Caco-2 (cell line): ENCODE measurements at regions of chr15 and their contacts with region 1.

Region 1: DNA sequence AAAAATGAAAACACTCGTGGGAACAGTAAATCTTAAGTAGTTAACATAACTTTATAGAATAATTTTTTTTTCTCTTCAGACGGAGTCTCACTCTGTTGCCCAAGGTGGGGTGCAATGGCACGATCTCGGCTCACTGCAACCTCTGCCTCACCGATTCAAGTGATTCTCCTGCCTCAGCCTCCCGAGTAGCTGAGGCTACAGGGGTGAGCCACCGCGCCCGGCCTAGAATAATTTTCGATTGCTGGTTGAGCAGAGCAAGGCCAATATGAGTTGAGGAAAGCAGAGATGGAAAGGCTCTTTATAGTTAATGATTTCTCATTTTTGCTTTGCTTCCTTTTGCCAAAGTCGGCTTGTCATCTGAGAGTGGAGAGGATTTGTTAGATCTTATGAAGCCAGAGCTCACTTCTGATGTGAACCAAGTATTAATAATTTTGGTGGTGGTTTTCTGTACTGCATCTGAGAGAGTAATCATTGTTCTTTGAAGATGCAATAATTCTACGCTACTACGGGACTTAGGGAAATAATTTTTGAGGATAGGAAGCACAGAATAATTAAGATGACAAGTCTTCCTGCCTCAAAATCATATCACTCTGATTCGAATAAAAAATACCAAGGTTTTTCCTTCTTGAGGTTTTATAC is 1.6 kb upstream of the GOLM2 start:
- DNase-seq: no peak
- H3K4me3 ChIP-seq: peak overlapping the region; percentile 80
- H3K4me3 Mint-ChIP-seq: peak overlapping the region; percentile 90
- H3K27ac Mint-ChIP-seq: peak overlapping the region; percentile 96
- H3K4me1 ChIP-seq: 0 out of 2 replicates have a peak, but pooled peaks cover 5% of the 10 kb centered on the region
- H3K4me1 Mint-ChIP-seq: no peaks in the 10 kb centered on the region
- H3K27me3 ChIP-seq: no peaks in the 10 kb centered on the region
- H3K27me3 Mint-ChIP-seq: no peaks in the 10 kb centered on the region
- CTCF ChIP-seq: peak in 1 of 2 experiments; percentile 10

Region 2: GRCh38 chr15:44298878-44299277 is 11.9 kb after region 1 on chr15:
- CTCF ChIA-PET with region 1: no interaction called
- POLR2A ChIA-PET with region 1: interaction called, 5 read pairs
- intact Hi-C with region 1: loop called (anchors 1 kb)
- DNase-seq: peak; percentile 41 to 42
- H3K4me3 ChIP-seq: no peak overlapping the region
- H3K4me3 Mint-ChIP-seq: no peak overlapping the region
- H3K27ac Mint-ChIP-seq: no peak overlapping the region
- H3K4me1 ChIP-seq: peaks cover 11% of the 10 kb centered on the region; the same call in 1 of the 2 replicates
- H3K4me1 Mint-ChIP-seq: peaks cover 13% of the 10 kb centered on the region
- H3K27me3 ChIP-seq: no peaks in the 10 kb centered on the region
- H3K27me3 Mint-ChIP-seq: no peaks in the 10 kb centered on the region
- CTCF ChIP-seq: peak; percentile 54 to 59

Region 3: DNA sequence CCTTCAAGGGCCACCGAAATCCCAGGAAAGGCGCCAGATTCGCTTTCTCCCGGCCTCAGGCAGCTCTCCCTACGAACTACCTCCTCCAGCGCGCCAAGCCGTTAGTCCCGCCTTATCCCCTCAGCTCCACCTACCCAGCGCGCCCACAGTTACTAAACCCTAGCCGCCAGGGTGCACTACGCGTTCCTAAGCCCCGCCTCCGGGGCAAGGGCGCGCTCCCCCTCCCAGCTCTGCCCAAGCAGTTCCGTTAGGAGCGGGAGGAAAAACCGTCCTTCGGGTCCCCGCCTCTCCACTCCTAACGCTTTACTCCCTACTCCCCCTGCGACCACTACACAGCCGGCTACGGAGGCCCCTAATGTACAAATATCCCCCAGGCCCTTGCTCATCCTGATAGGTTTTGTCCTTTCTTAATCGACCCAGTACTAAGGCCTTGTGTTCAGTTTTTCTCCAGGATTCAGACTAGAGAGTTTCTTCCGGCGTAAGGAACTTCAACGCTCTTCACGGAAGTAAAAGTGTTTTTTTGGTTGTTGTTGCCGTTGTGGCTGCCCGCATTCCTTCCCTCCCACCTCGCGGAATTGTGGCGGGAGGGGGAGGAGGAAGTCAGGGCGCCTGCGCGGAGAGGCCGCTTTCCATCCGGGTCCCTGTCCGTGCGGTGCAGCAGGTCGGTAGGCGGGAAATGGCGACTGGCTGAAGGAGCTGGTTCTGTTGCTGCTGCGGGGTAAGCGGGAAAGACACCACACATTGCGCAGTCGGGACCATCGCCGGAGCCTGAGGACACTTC is 140.2 kb after region 1 on chr15 and contains the start of gene CTDSPL2:
- CTCF ChIA-PET with region 1: interaction called, 21 read pairs
- POLR2A ChIA-PET with region 1: interaction called, 24 read pairs
- intact Hi-C with region 1: loop called (anchors 2 kb)
- DNase-seq: peak; percentile 97 to 98
- H3K4me3 ChIP-seq: peak within 1 kb of the TSS; percentile 74
- H3K4me3 Mint-ChIP-seq: peak within 1 kb of the TSS; percentile 97
- H3K27ac Mint-ChIP-seq: peak within 1 kb of the TSS; percentile 99
- H3K4me1 ChIP-seq: peaks cover 8% of the 10 kb centered on the region
- H3K4me1 Mint-ChIP-seq: peaks cover 8% of the 10 kb centered on the region
- H3K27me3 ChIP-seq: no peaks in the 10 kb centered on the region
- H3K27me3 Mint-ChIP-seq: no peaks in the 10 kb centered on the region
- CTCF ChIP-seq: peak in 1 of 2 experiments; percentile 37
- total RNA-seq, gene CTDSPL2: 55.9 and 60.8 TPM in 2 replicates

Region 4: DNA sequence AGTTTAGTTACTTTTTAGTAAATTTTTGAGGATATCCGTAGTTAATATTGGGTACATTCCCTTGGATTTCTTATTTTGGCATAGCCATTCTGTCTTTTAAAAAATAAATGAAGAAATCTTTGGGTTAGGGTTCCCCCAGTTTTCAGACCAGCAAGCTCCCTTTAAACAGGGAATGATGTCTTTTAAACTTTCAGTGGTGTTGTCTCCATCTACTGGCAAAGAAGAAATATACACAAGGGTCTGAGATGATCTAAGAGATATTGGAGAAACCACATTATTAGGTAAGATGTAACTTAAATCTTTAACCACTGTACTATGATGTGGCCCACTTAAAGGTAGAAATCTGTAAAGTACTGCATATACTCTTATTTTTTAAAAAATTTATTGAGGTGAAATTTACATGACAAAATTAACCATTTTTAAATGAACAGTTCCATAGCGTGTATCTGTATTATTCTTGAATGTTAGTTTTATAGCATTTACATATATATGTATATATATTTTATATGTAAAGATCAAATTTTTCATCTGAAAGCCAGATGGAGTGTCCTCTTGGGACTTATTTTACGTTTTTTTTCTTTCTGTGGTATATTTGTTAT is 214.9 kb after region 1 on chr15:
- CTCF ChIA-PET with region 1: interaction called, 10 read pairs
- POLR2A ChIA-PET with region 1: no interaction called
- intact Hi-C with region 1: loop called (anchors 5 kb)
- DNase-seq: no peak
- H3K4me3 ChIP-seq: no peak overlapping the region
- H3K4me3 Mint-ChIP-seq: no peak overlapping the region
- H3K27ac Mint-ChIP-seq: no peak overlapping the region
- H3K4me1 ChIP-seq: no peaks in the 10 kb centered on the region
- H3K4me1 Mint-ChIP-seq: no peaks in the 10 kb centered on the region
- H3K27me3 ChIP-seq: no peaks in the 10 kb centered on the region
- H3K27me3 Mint-ChIP-seq: no peaks in the 10 kb centered on the region
- CTCF ChIP-seq: peak; percentile 60 to 62

Region 5: GRCh38 chr15:44536962-44537734 is 250.2 kb after region 1 on chr15 and contains the start of gene EIF3J:
- CTCF ChIA-PET with region 1: no interaction called
- POLR2A ChIA-PET with region 1: interaction called, 7 read pairs
- intact Hi-C with region 1: loop called (anchors 10 kb)
- DNase-seq: peak; percentile 95 to 97
- H3K4me3 ChIP-seq: peak within 1 kb of the TSS; percentile 93
- H3K4me3 Mint-ChIP-seq: peak within 1 kb of the TSS; percentile 94
- H3K27ac Mint-ChIP-seq: peak within 1 kb of the TSS; percentile 90
- H3K4me1 ChIP-seq: peaks cover 4% of the 10 kb centered on the region; the same call in 1 of the 2 replicates
- H3K4me1 Mint-ChIP-seq: peaks cover 12% of the 10 kb centered on the region
- H3K27me3 ChIP-seq: no peaks in the 10 kb centered on the region
- H3K27me3 Mint-ChIP-seq: no peaks in the 10 kb centered on the region
- CTCF ChIP-seq: no peak
- total RNA-seq, gene EIF3J: 179 and 182 TPM in 2 replicates